ENCODE measurements at regions of chr16 and their contacts with region 1.

Region 1: GRCh38 chr16:66399930-66400329 is 27.2 kb upstream of the BEAN1 start:
- DNase-seq: no peak
- H3K4me3 ChIP-seq: no peak overlapping the region
- H3K27ac ChIP-seq: no peak overlapping the region
- H3K4me1 ChIP-seq: peaks cover 0 to 10% (median 0%) of the 10 kb centered on the region in 3 donors
- H3K27me3 ChIP-seq: peaks cover 0 to 10% (median 0%) of the 10 kb centered on the region in 4 donors
- CTCF ChIP-seq: no peak
- POLR2A ChIP-seq: no peak

Region 2: DNA sequence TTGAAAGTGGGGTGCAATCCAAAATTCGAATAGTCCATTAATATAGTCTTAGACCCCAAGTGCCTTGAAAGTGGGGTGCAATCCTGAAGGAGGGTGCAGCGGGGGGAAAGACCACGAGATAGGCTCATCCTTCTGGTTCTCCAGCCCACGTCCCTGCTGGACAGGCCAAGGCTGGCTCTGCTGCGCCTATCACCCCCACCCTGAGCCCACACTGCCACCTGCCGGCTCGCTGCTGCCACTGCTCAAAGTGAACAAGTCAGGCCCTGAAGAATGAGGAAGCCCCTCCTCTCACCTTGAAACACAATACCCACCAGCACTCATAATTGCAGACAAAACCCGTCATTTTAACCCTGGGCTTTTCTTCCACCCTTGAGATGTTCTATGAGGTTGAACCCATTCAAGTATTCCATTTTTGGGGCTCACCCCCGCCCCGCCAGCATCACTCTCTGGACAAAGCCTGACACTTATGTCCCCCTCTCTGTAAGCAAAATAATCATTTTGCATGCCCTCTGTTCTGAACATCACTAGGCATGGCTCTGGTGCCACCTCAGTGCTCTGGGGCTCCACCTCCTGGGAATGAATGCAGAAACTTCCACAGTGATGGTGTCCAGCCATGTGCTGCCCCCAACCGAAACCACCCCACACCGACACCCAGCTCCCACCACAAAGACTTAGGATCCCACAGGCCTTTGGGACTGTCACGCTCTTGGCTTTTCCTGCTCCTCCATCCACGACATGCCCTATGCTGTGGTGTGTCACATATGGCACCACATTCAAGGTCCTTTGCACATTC is 84.0 kb after region 1 on chr16:
- intact Hi-C with region 1: loop called (anchors 5 kb)
- DNase-seq: no peak
- H3K4me3 ChIP-seq: no peak overlapping the region
- H3K27ac ChIP-seq: no peak overlapping the region
- H3K4me1 ChIP-seq: peaks cover 22 to 51% (median 27%) of the 10 kb centered on the region in 3 donors
- H3K27me3 ChIP-seq: no peaks in the 10 kb centered on the region
- CTCF ChIP-seq: peak; percentile 85 to 95 (median 92)
- POLR2A ChIP-seq: no peak